ENCODE measurements at regions of chr4 and their contacts with region 1.

Region 1: GRCh38 chr4:174522183-174523048 is at the start of gene HPGD:
- DNase-seq: peak; percentile 56
- H3K4me3 Mint-ChIP-seq: peak within 1 kb of the TSS; percentile 85
- H3K27ac Mint-ChIP-seq: peak within 1 kb of the TSS; percentile 74
- H3K4me1 Mint-ChIP-seq: peaks cover 23% of the 10 kb centered on the region
- H3K27me3 Mint-ChIP-seq: peaks cover 50% of the 10 kb centered on the region
- total RNA-seq, gene HPGD: 2.6 and 3.1 TPM in 2 replicates

Region 2: DNA sequence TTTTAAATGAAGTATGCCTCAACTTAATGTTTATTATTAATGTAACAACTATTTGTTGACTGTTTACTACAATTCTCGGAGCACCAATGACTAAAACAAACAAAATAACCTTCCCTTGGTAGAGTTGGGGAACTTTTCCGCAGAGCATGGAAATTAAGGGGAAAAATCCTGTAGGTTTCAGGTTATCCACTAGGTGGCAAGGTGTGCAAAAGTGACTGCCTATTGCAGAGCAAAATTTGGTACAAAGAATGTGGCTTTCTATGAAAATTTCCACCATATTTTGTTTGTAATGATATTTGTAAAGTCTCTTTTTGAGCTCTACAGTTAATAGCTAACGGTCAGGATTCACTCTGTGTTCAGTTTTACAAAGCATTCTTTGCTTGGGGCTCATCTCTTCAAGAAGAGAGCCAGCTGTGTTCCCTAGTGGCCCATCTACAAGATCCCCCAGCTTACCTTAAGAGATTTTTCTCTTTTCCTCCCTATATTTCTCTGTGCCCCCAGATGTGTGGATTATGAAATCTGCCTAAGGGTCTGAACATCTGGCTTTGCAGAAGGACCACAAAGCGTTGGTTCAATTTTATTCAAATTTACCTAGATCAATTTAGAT is 300.0 kb before region 1 on chr4:
- intact Hi-C with region 1: loop called (anchors 5 kb)
- DNase-seq: no peak
- H3K4me3 Mint-ChIP-seq: no peak overlapping the region
- H3K27ac Mint-ChIP-seq: no peak overlapping the region
- H3K4me1 Mint-ChIP-seq: peaks cover 11% of the 10 kb centered on the region
- H3K27me3 Mint-ChIP-seq: peaks cover 56% of the 10 kb centered on the region

Region 3: GRCh38 chr4:174358829-174359228 is 163.6 kb before region 1 on chr4:
- intact Hi-C with region 1: loop called (anchors 2 kb)
- DNase-seq: peak; percentile 22
- H3K4me3 Mint-ChIP-seq: no peak overlapping the region
- H3K27ac Mint-ChIP-seq: peak overlapping the region; percentile 84
- H3K4me1 Mint-ChIP-seq: peaks cover 26% of the 10 kb centered on the region
- H3K27me3 Mint-ChIP-seq: peaks cover 13% of the 10 kb centered on the region

Region 4: DNA sequence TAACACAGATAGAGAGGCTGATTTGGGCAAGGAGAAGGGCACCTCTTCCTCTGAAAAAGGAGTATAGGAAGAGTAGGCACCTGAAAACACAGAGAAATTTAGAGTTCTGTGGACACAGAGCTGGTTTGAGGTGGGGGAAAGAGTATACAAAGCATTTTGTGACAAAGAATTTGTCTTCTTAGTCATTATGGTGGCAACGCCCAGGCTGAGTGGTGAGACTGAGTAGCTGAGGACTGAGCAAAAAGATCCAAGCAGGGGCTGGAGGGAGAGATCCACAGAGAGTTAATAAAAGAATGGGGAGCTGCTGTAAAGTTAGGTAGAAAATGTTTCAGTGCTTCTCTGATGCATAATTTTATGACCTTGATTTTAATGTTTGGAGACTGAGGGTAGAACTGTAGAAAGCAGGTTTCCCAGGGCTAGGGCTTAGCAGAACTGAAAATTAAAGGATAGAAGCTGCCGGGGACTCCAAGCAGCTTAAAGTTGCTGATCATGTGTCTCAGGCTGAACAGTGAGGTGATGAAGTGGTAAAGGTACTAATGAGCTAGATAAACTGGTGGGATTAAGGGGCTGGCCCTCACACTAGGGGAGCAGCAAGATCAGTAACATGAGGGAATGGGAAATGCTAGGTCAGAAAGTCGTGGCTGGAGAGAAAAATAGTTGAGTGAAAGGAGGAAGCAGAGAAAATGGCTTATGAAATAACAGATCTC is 119.8 kb before region 1 on chr4:
- intact Hi-C with region 1: no loop called
- DNase-seq: no peak
- H3K4me3 Mint-ChIP-seq: no peak overlapping the region
- H3K27ac Mint-ChIP-seq: no peak overlapping the region
- H3K4me1 Mint-ChIP-seq: no peaks in the 10 kb centered on the region
- H3K27me3 Mint-ChIP-seq: peaks cover 7% of the 10 kb centered on the region

Region 5: DNA sequence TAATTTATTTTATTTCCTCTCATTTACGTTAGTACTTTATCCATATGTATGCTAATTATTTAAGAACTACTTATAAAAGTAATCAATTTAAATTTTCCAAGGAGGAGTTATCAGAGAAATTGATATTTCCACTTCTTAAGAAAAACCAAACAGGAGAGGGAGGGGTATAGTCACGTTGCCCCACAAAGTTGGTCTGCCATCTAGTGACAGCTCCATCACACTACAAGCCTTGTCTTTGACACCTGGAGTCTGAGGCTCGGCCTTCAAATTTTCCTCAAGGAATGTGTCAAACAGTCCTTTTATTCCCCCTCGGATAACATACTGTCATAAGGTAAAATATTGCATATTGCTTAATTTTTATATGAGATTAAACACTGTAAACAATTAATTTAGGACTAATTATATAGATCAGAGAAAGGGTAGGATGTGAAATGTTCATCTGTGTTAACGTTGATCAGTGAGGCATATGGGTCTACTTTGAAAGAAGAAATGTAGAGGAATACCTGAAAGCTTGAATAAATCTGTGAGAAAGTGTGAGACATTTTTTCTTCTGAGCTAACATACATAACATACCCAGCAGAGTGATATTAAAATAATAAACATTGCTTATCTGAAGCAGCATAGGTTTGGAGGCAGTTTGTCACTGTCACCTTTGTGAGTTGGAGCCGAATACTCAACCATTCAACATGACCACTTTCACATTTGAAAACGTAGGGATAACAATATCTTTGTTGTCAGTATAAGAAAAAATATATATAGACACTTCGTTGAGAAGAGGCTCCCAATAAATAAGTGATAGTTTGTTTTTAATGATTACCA is 192.2 kb after region 1 on chr4:
- intact Hi-C with region 1: loop called (anchors 1 kb)
- DNase-seq: no peak
- H3K4me3 Mint-ChIP-seq: no peak overlapping the region
- H3K27ac Mint-ChIP-seq: no peak overlapping the region
- H3K4me1 Mint-ChIP-seq: no peaks in the 10 kb centered on the region
- H3K27me3 Mint-ChIP-seq: peaks cover 8% of the 10 kb centered on the region

Measured in activated T-helper 1 cell treated with anti-CD3 and anti-CD28 coated beads, Interleukin-12 subunit alpha, Interleukin-12 subunit beta, Interleukin-2, Interleukin-4 antibody, amounts not matched to agents 30 ng/mL and 10 ng/mL and 1 ng/mL, durations not matched to agents 14 hours and 24 hours and 36 hours (primary cell).